ENCODE measurements at regions of chr1 and their contacts with region 1.

Region 1: DNA sequence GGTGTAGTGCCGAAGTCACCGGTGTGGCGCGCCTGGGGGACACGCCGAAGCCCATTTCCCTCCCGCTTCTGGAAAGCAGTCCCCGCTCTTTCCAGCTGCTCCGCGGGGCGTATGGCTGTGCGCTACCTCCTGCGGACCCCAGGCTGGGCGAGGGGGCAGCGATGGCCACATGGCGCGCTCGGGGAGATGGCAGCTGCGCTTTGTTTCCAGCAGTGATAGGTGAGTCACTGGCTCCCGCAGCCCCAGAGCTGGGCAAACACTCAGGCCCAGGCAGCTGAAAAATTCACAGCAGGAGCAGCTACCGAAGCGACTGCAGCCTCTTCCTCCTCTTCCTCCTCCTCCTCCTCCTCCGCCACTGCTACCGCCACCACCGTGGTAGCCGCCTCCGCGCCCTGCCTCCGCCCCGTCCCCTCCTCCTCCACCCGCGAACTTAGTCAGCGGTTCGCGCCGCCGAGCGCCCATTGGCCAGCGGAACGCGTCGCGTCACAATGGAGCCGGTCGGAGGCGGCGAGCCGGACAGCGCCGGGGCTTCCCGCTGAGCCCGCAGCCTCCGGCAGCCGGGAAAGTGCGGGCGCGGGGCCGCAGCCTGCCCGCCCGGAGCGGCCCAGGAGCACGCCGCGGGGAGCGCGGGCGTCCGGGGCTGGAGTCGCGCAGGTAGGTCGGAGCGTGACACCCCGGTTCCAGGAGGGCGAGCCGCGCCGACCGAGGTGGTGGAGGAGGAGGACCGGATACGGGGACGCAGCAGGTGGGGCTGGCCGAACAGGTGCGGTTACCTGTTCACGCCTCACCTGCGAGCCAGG is at the start of gene LRRC8B:
- DNase-seq: peak; percentile 92
- H3K4me3 ChIP-seq: peak within 1 kb of the TSS; percentile 91
- H3K27ac ChIP-seq: peak within 1 kb of the TSS; percentile 84
- H3K4me1 ChIP-seq: peaks cover 35% of the 10 kb centered on the region
- H3K27me3 ChIP-seq: no peaks in the 10 kb centered on the region
- CTCF ChIP-seq: no peak
- total RNA-seq, gene LRRC8B: 18.9 and 20.0 TPM in 2 replicates

Region 2: GRCh38 chr1:89566761-89567174 is 42.2 kb after region 1 on chr1:
- CTCF ChIA-PET with region 1: no interaction called
- POLR2A ChIA-PET with region 1: no interaction called
- intact Hi-C with region 1: no loop called
- DNase-seq: peak; percentile 70
- H3K4me3 ChIP-seq: peak overlapping the region; percentile 21
- H3K27ac ChIP-seq: peak overlapping the region; percentile 88
- H3K4me1 ChIP-seq: peaks cover 40% of the 10 kb centered on the region
- H3K27me3 ChIP-seq: no peaks in the 10 kb centered on the region
- CTCF ChIP-seq: no peak

Region 3: GRCh38 chr1:89994805-89995597 is 470.4 kb after region 1 on chr1 and contains the start of gene ZNF326:
- CTCF ChIA-PET with region 1: no interaction called
- POLR2A ChIA-PET with region 1: no interaction called
- intact Hi-C with region 1: loop called (anchors 10 kb)
- DNase-seq: peak; percentile 97
- H3K4me3 ChIP-seq: peak within 1 kb of the TSS; percentile 73
- H3K27ac ChIP-seq: peak within 1 kb of the TSS; percentile 96
- H3K4me1 ChIP-seq: peaks cover 56% of the 10 kb centered on the region
- H3K27me3 ChIP-seq: no peaks in the 10 kb centered on the region
- CTCF ChIP-seq: no peak
- total RNA-seq, gene ZNF326: 54.4 and 60.1 TPM in 2 replicates